Heart left ventricle (tissue), 16 donors: ENCODE measurements at regions of chr5 and their contacts with region 1.

Region 1: GRCh38 chr5:169548315-169548714 is 35.3 kb upstream of the SPDL1 start:
- DNase-seq: no peak
- ATAC-seq: peak in 3 of 4 donors; percentile 74 to 87 (median 79)
- H3K4me3 ChIP-seq: no peak overlapping the region
- H3K27ac ChIP-seq: no peak overlapping the region
- H3K4me1 ChIP-seq: no peaks in the 10 kb centered on the region
- H3K27me3 ChIP-seq: peaks cover 0 to 29% (median 6%) of the 10 kb centered on the region in 9 donors
- CTCF ChIP-seq: peak in 11 of 12 donors; percentile 18 to 61 (median 50)
- POLR2A ChIP-seq: no peak

Region 2: DNA sequence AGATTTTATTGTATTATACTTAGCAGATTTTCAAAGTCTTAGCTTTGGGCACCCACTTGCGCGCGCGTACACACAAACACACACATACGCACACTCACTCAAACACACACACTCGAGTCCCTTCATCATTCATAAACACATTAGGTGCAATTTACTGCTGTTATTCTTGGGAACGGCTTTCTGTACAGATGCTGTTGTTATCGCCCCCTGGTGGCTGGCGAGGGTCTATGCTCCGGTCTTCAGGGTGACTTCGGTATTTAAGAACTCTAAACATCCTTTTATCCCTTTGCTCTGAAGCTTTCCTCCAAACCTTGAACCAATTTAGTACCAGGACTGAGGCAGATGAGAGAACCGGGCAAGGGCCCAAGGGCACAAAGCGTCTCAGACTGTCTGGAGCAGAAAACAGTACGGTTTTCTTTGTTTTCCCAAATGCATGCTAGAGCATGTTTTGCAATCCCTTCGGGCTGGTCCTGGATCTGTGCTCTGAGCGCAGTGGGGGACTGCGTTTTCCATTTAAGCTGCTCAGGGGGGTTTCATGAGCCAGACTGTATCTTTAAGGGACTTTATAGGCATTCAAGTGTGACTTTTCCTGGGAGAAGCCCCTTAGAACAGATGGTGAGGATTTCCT is 245.7 kb before region 1 on chr5:
- intact Hi-C with region 1: loop called in 2 of 10 experiments (anchors 5 kb)
- DNase-seq: peak; percentile 58 to 76 (median 65)
- ATAC-seq: peak in 3 of 4 donors; percentile 30 to 62 (median 53)
- H3K4me3 ChIP-seq: no peak overlapping the region
- H3K27ac ChIP-seq: no peak overlapping the region
- H3K4me1 ChIP-seq: peaks cover 0 to 34% (median 7%) of the 10 kb centered on the region in 12 donors
- H3K27me3 ChIP-seq: peaks cover 0 to 48% (median 24%) of the 10 kb centered on the region in 9 donors
- CTCF ChIP-seq: peak; percentile 77 to 92 (median 88)
- POLR2A ChIP-seq: no peak

Region 3: GRCh38 chr5:169318556-169318955 is 229.8 kb before region 1 on chr5:
- intact Hi-C with region 1: loop called in 1 of 10 experiments (anchors 10 kb)
- DNase-seq: no peak
- ATAC-seq: no peak
- H3K4me3 ChIP-seq: no peak overlapping the region
- H3K27ac ChIP-seq: no peak overlapping the region
- H3K4me1 ChIP-seq: no peaks in the 10 kb centered on the region
- H3K27me3 ChIP-seq: peaks cover 0 to 5% (median 0%) of the 10 kb centered on the region in 9 donors
- CTCF ChIP-seq: no peak
- POLR2A ChIP-seq: no peak

Region 4: GRCh38 chr5:169650701-169651331 is 102.5 kb after region 1 on chr5:
- intact Hi-C with region 1: no loop called
- DNase-seq: no peak
- ATAC-seq: no peak
- H3K4me3 ChIP-seq: peak overlapping the region in 1 of 12 donors; percentile 7
- H3K27ac ChIP-seq: peak overlapping the region in 1 of 12 donors; percentile 79
- H3K4me1 ChIP-seq: peaks cover 0 to 80% (median 9%) of the 10 kb centered on the region in 12 donors
- H3K27me3 ChIP-seq: peaks cover 0 to 4% (median 0%) of the 10 kb centered on the region in 9 donors
- CTCF ChIP-seq: no peak
- POLR2A ChIP-seq: no peak